Endothelial cell of umbilical vein (primary cell): ENCODE measurements at regions of chr12 and their contacts with region 1.

Region 1: GRCh38 chr12:110888256-110888991 is 32.0 kb downstream of the MYL2 start:
- DNase-seq: no peak
- H3K4me3 ChIP-seq: no peak overlapping the region
- H3K27ac ChIP-seq: no peak overlapping the region
- H3K4me1 ChIP-seq: peaks cover 5% of the 10 kb centered on the region
- H3K27me3 ChIP-seq: peaks cover 0 to 3% of the 10 kb centered on the region in 2 experiments
- CTCF ChIP-seq: no peak
- POLR2A ChIP-seq: no peak

Region 2: GRCh38 chr12:110508071-110508586 is 380.3 kb before region 1 on chr12:
- CTCF ChIA-PET with region 1: interaction called, 5 read pairs
- POLR2A ChIA-PET with region 1: no interaction called
- dilution Hi-C with region 1: no loop called
- intact Hi-C with region 1: loop called (anchors 1 kb)
- DNase-seq: no peak
- H3K4me3 ChIP-seq: no peak overlapping the region
- H3K27ac ChIP-seq: no peak overlapping the region
- H3K4me1 ChIP-seq: no peaks in the 10 kb centered on the region
- H3K27me3 ChIP-seq: no peaks in the 10 kb centered on the region
- CTCF ChIP-seq: no peak
- POLR2A ChIP-seq: no peak

Region 3: GRCh38 chr12:110846615-110847566 is 41.5 kb before region 1 on chr12 and contains the start of gene CCDC63:
- CTCF ChIA-PET with region 1: interaction called, 16 read pairs
- POLR2A ChIA-PET with region 1: no interaction called
- dilution Hi-C with region 1: no loop called
- intact Hi-C with region 1: no loop called
- DNase-seq: peak; percentile 50
- H3K4me3 ChIP-seq: no peak within 1 kb of the TSS
- H3K27ac ChIP-seq: no peak within 1 kb of the TSS
- H3K4me1 ChIP-seq: no peaks in the 10 kb centered on the region
- H3K27me3 ChIP-seq: peaks cover 11 to 24% of the 10 kb centered on the region in 2 experiments
- CTCF ChIP-seq: peak; percentile 37 to 70
- POLR2A ChIP-seq: no peak
- total RNA-seq, gene CCDC63: not detected in 2 replicates